ENCODE measurements at regions of chr12 and their contacts with region 1.

Region 1: DNA sequence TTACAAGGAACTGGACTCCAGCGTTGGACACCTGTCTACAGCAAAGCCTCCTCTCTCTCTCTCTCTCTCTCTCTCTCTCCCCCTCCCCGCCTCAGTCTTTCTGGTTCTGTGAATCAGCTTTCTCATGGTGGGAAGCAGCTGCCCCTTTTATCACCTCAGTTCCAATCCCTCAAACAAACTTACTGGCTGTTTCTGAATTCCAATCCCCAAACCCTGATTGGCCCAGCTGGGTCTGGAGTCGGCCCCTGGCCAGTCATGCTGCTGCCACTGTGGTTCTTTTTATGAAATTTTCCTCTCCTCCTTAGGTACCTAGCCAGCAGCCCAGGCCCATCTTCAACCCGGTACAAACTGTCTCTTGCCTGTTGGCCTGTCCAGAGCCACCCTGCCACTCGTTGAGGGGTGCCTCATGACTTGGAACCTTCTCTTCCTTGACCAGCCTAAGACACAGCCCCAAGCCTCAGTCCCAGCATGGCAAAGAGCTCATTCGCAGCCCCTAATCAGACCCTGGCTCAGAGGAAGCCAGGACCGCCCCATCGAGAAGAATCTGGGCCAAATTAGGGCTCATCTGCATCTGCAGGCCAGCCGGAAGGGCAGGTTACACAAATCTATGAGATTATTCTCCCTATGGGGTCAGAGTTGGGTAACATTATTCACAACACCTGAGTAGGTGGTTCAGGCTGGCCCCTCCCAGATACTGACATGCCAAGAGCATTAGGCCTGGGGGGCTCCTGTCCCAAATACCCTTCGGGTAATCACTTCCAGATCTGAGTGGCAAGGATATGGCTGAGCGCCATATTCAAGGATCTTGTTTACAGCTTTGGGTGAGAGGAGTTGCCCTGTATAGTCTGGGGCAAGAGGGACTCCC is 9.5 kb upstream of the MORN3 start:
- DNase-seq: no peak
- ATAC-seq: 0 out of 2 replicates have a peak, but pooled peaks have one; percentile 23
- H3K4me3 ChIP-seq: no peak overlapping the region
- H3K27ac ChIP-seq: no peak overlapping the region; the same call in 1 of the 2 replicates
- H3K4me1 ChIP-seq: no peaks in the 10 kb centered on the region
- H3K27me3 ChIP-seq: no peaks in the 10 kb centered on the region
- CTCF ChIP-seq: no peak

Region 2: GRCh38 chr12:121668750-121669520 is 10.0 kb before region 1 on chr12:
- CTCF ChIA-PET with region 1: interaction called, 11 read pairs
- POLR2A ChIA-PET with region 1: no interaction called
- in situ Hi-C with region 1: no loop called
- intact Hi-C with region 1: no loop called
- DNase-seq: no peak
- ATAC-seq: no peak
- H3K4me3 ChIP-seq: no peak overlapping the region
- H3K27ac ChIP-seq: no peak overlapping the region
- H3K4me1 ChIP-seq: peaks cover 12% of the 10 kb centered on the region
- H3K27me3 ChIP-seq: no peaks in the 10 kb centered on the region
- CTCF ChIP-seq: no peak; the same call in 1 of the 2 replicates